Activated CD4-positive, alpha-beta T cell treated with anti-CD3 and anti-CD28 coated beads, Interleukin-2, amount 10 ng/mL, durations not matched to agents 7 days and 5 days (primary cell): ENCODE measurements at regions of chr10 and their contacts with region 1.

Region 1: GRCh38 chr10:128150045-128150493 is 23.8 kb upstream of the MKI67 start:
- DNase-seq: peak; percentile 79
- H3K4me3 Mint-ChIP-seq: peak overlapping the region; percentile 63
- H3K27ac Mint-ChIP-seq: no peak overlapping the region
- H3K4me1 Mint-ChIP-seq: peaks cover 11% of the 10 kb centered on the region
- H3K27me3 Mint-ChIP-seq: peaks cover 16% of the 10 kb centered on the region

Region 2: GRCh38 chr10:128000471-128001362 is 149.4 kb before region 1 on chr10:
- CTCF ChIA-PET with region 1: no interaction called
- POLR2A ChIA-PET with region 1: no interaction called
- DNase-seq: no peak
- H3K4me3 Mint-ChIP-seq: no peak overlapping the region
- H3K27ac Mint-ChIP-seq: no peak overlapping the region
- H3K4me1 Mint-ChIP-seq: no peaks in the 10 kb centered on the region
- H3K27me3 Mint-ChIP-seq: peaks cover 28% of the 10 kb centered on the region

Region 3: GRCh38 chr10:128137877-128138276 is 12.2 kb before region 1 on chr10:
- CTCF ChIA-PET with region 1: interaction called, 14 read pairs
- POLR2A ChIA-PET with region 1: no interaction called
- DNase-seq: no peak
- H3K4me3 Mint-ChIP-seq: no peak overlapping the region
- H3K27ac Mint-ChIP-seq: no peak overlapping the region
- H3K4me1 Mint-ChIP-seq: peaks cover 6% of the 10 kb centered on the region
- H3K27me3 Mint-ChIP-seq: peaks cover 12% of the 10 kb centered on the region